ENCODE measurements at regions of chr1 and their contacts with region 1.

Region 1: GRCh38 chr1:53485478-53486394 is 26.5 kb downstream of the DMRTB1 start:
- DNase-seq: peak; percentile 38 to 79 (median 67)
- ATAC-seq: peak; percentile 44
- H3K4me3 ChIP-seq: no peak overlapping the region
- H3K4me3 Mint-ChIP-seq: no peak overlapping the region
- H3K27ac ChIP-seq: no peak overlapping the region
- H3K27ac Mint-ChIP-seq: no peak overlapping the region
- H3K4me1 ChIP-seq: no peaks in the 10 kb centered on the region
- H3K4me1 Mint-ChIP-seq: peaks cover 5% of the 10 kb centered on the region
- H3K27me3 ChIP-seq: peaks cover 2 to 6% of the 10 kb centered on the region in 2 experiments
- H3K27me3 Mint-ChIP-seq: peaks cover 21% of the 10 kb centered on the region
- CTCF ChIP-seq: peak; percentile 62

Region 2: DNA sequence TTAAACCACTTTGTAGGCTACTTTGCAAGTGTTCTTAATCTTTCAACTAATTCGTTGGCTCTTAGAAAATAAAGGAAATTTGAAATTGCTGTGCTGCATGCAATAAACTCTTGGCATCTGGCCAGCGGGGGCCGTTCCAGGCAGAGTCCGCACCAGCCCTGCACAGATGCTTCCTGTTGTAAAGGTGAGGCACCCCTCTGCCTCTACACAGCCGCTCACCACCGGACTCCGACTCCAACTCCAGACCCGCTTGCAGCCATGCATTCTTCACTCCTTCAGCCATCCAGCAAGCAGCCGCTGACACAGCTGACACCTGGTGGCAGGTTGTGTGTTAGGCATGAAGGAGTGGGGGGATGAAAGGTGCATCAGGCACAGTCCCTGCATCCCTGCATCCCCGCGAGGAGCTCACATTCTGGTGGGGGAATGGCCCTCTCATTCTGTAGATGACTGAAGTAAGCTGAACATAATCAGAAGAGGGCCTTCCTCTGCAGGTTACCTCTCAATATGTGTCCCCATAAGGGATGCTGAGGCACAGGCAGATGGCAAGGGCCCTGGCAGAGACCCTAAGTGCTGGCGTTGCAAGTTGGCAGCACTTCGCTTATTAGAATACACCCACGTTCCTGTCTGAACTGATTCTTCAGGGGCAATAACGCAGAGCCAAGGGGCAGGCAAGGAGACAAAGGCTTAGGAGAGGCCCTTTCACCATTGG is 196.4 kb after region 1 on chr1:
- CTCF ChIA-PET with region 1: interaction called, 6 read pairs
- POLR2A ChIA-PET with region 1: no interaction called
- intact Hi-C with region 1: loop called in 1 of 2 experiments (anchors 1 kb)
- DNase-seq: peak; percentile 5 to 68 (median 40)
- ATAC-seq: peak; percentile 62
- H3K4me3 ChIP-seq: peak overlapping the region in 1 of 2 experiments; percentile 2
- H3K4me3 Mint-ChIP-seq: peak overlapping the region; percentile 67
- H3K27ac ChIP-seq: no peak overlapping the region
- H3K27ac Mint-ChIP-seq: no peak overlapping the region
- H3K4me1 ChIP-seq: peaks cover 10% of the 10 kb centered on the region
- H3K4me1 Mint-ChIP-seq: peaks cover 11% of the 10 kb centered on the region
- H3K27me3 ChIP-seq: no peaks in the 10 kb centered on the region
- H3K27me3 Mint-ChIP-seq: peaks cover 9% of the 10 kb centered on the region
- CTCF ChIP-seq: peak; percentile 45

Region 3: DNA sequence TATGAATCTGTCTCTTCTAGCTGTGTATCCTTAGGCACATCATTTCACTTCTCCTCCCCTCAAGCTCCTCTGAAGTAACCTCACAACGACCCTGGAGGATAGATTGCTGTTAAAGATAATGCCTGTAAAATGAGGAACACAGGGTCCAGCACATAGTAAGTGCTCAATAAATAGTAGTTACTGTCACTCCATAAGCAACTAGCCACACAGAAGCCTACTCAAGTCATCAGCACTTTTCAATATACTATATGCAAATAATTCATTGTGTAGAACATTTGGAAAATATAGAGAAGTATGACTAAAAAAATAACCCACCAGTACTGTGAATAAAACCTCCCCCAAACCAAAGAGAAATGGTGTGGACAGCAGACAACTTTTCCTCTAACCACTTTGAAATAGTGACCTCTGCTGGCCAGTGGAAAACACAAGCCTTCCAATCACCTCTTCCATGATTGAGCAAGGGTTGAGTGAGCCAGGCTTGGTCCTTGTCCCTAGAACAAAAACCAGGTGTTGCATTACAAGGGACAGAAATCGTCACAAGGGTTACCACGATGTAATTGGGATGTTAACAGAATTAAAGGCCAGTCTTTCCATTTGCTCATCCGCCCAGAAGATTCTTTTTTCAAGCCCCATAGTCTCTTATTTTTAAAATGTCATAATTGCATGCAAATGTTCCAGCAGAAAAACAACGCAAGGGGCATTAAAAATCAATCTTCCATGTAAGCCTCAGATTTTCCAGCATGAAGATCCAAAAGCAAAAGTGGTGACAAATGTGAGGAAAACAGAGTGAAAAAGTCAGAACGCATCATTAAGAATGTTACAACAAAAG is 269.0 kb after region 1 on chr1:
- CTCF ChIA-PET with region 1: interaction called, 3 read pairs
- POLR2A ChIA-PET with region 1: no interaction called
- intact Hi-C with region 1: loop called in 1 of 2 experiments (anchors 1 kb)
- DNase-seq: peak in 3 of 9 experiments; percentile 17 to 53 (median 49)
- ATAC-seq: no peak
- H3K4me3 ChIP-seq: no peak overlapping the region
- H3K4me3 Mint-ChIP-seq: no peak overlapping the region
- H3K27ac ChIP-seq: no peak overlapping the region
- H3K27ac Mint-ChIP-seq: no peak overlapping the region
- H3K4me1 ChIP-seq: no peaks in the 10 kb centered on the region
- H3K4me1 Mint-ChIP-seq: no peaks in the 10 kb centered on the region
- H3K27me3 ChIP-seq: no peaks in the 10 kb centered on the region
- H3K27me3 Mint-ChIP-seq: no peaks in the 10 kb centered on the region
- CTCF ChIP-seq: peak; percentile 40

Measured in CD8-positive, alpha-beta T cell (primary cell).